Aorta (tissue), 5 donors: ENCODE measurements at regions of chr14 and their contacts with region 1.

Region 1: GRCh38 chr14:30214461-30215090 is 286.9 kb upstream of the PRKD1 start:
- DNase-seq: no peak
- ATAC-seq: peak; percentile 72
- H3K4me3 ChIP-seq: no peak overlapping the region
- H3K27ac ChIP-seq: no peak overlapping the region
- H3K4me1 ChIP-seq: no peaks in the 10 kb centered on the region
- H3K27me3 ChIP-seq: no peaks in the 10 kb centered on the region

Region 2: DNA sequence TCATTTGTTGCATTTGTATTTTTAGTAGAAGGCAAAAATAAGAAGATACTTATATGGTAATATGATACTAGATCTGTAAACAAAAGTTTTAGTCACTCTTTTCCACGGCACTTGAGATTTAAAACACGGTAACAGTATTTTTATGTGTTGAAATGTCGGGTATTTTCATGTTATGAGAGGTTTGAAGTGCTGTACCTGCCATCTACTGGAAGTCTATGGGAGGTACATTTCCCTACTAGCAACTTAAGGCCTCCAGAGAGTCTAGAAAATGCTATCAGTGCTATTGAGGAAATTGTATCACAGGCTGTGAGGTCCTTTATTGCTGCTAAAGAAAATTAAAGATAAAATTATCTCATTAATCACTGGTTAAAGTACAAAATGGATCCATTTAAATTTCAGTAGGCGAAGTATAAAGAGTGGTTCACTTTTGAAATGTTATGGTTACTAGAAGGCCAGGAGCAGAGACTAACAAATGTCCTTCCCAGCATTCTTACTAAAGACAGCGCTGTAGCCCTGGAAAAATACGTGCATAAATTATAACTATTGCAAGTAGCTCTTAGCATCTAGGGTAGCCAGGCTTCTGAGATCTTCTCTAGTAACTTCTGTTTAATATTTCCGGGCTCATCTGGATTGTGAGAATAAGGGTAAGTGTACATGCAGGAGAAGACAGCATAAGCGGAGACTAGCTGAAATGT is 209.3 kb before region 1 on chr14:
- intact Hi-C with region 1: loop called (anchors 5 to 10 kb)
- DNase-seq: no peak
- ATAC-seq: peak; percentile 72
- H3K4me3 ChIP-seq: no peak overlapping the region
- H3K27ac ChIP-seq: no peak overlapping the region
- H3K4me1 ChIP-seq: no peaks in the 10 kb centered on the region
- H3K27me3 ChIP-seq: no peaks in the 10 kb centered on the region